Endothelial cell of umbilical vein (primary cell): ENCODE measurements at regions of chr5 and their contacts with region 1.

Region 1: DNA sequence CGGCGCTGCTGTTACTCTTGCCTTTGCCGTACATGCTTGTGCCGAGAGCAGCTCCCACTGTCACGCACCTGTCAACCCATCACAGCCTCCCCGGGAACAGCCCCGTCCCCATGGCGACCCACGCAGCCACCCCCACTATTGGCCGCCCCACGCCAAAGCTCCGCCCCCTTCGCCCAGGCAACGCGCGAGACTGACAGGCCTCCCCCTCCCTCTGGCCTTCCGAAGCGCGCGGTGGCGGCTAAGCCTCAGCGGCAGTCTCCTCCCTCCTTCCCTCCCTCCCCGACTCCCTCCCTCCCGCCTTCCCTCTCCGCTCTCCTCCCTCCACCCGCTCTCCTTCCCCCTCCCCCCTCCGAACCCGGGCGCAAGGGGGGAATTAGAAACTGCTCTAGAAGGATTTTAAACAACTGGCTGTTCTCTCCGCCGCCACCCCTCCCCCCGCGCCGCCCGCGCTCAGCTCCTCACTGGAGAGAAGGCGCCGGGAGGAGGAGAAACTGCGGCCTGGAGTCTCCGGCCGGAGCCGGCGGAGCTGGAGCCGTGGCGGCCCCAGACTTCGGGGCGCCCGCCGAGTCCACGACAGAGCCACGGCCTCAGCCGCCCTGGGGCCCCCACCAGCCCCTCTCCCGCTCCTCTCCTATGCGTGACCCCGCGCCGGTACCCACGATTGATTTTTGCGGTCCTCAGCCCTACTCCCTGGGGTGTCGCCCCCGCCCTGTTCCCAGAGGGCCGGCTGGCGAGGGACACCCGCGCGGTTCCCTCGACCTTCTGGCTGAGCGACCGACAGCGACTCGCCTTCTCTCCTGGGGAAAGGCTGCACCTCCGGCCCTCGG is at the start of gene SSBP2:
- DNase-seq: peak; percentile 99
- H3K4me3 ChIP-seq: peak within 1 kb of the TSS; percentile 55 to 76 (median 69)
- H3K27ac ChIP-seq: peak within 1 kb of the TSS; percentile 92
- H3K4me1 ChIP-seq: peaks cover 15% of the 10 kb centered on the region
- H3K27me3 ChIP-seq: no peaks in the 10 kb centered on the region
- CTCF ChIP-seq: no peak
- POLR2A ChIP-seq: peak; percentile 63
- total RNA-seq, gene SSBP2: 7.9 and 9.6 TPM in 2 replicates

Region 2: DNA sequence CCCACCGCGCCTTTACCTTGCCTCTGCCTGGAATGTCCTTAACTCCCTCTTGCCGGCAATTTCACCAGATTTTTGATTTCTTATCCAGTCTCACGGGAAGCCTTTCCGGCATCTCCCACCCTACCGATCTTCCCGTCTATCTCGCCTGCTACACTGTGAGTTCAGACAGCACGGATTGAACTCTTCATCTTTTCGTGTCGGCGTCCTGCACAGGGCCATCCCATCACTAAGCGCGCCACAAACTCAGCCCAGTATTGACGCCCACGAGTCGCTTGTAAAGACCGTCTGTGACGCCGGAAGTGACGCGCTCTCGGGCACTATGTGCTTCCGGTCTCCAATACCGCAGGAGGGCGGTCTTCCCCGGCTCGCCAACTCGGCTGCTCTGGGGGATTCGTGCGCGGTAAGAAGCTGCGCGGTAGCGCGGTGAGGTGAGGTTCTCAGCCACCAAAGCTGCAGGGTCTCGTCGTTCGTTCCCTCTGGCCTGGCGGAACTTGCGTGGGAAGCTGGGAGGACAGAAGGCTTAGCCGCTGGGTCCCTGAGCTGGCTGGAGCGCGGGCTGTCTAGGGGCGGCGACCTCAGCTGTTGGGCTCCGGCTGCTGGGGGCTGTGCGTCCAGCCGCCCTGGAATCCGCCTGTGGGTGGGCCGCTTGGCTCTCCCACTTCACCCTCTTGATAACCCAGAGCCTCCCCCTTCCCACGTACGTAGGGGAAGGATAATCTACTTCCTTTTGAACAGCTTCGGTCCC is 449.8 kb before region 1 on chr5 and contains the start of gene ZCCHC9:
- CTCF ChIA-PET with region 1: interaction called, 3 read pairs
- POLR2A ChIA-PET with region 1: no interaction called
- dilution Hi-C with region 1: no loop called
- intact Hi-C with region 1: loop called (anchors 1 kb)
- DNase-seq: peak; percentile 95
- H3K4me3 ChIP-seq: peak within 1 kb of the TSS; percentile 46 to 76 (median 66)
- H3K27ac ChIP-seq: peak within 1 kb of the TSS; percentile 68
- H3K4me1 ChIP-seq: peaks cover 16% of the 10 kb centered on the region
- H3K27me3 ChIP-seq: no peaks in the 10 kb centered on the region
- CTCF ChIP-seq: peak in 1 of 2 donors; percentile 14
- POLR2A ChIP-seq: peak; percentile 97
- total RNA-seq, gene ZCCHC9: 22.2 and 23.9 TPM in 2 replicates

Region 3: GRCh38 chr5:81513982-81514381 is 237.2 kb before region 1 on chr5:
- CTCF ChIA-PET with region 1: interaction called, 47 read pairs
- POLR2A ChIA-PET with region 1: no interaction called
- dilution Hi-C with region 1: no loop called
- intact Hi-C with region 1: loop called (anchors 1 kb)
- DNase-seq: peak; percentile 30
- H3K4me3 ChIP-seq: no peak overlapping the region
- H3K27ac ChIP-seq: no peak overlapping the region
- H3K4me1 ChIP-seq: peaks cover 8% of the 10 kb centered on the region
- H3K27me3 ChIP-seq: no peaks in the 10 kb centered on the region
- CTCF ChIP-seq: no peak
- POLR2A ChIP-seq: no peak

Region 4: GRCh38 chr5:81779125-81779915 is 28.1 kb after region 1 on chr5:
- CTCF ChIA-PET with region 1: interaction called, 10 read pairs
- POLR2A ChIA-PET with region 1: interaction called, 5 read pairs
- dilution Hi-C with region 1: no loop called
- intact Hi-C with region 1: loop called (anchors 1 kb)
- DNase-seq: peak; percentile 74
- H3K4me3 ChIP-seq: peak overlapping the region in 2 of 3 experiments; percentile 12 to 52
- H3K27ac ChIP-seq: peak overlapping the region; percentile 41
- H3K4me1 ChIP-seq: peaks cover 11% of the 10 kb centered on the region
- H3K27me3 ChIP-seq: no peaks in the 10 kb centered on the region
- CTCF ChIP-seq: no peak
- POLR2A ChIP-seq: no peak

Region 5: DNA sequence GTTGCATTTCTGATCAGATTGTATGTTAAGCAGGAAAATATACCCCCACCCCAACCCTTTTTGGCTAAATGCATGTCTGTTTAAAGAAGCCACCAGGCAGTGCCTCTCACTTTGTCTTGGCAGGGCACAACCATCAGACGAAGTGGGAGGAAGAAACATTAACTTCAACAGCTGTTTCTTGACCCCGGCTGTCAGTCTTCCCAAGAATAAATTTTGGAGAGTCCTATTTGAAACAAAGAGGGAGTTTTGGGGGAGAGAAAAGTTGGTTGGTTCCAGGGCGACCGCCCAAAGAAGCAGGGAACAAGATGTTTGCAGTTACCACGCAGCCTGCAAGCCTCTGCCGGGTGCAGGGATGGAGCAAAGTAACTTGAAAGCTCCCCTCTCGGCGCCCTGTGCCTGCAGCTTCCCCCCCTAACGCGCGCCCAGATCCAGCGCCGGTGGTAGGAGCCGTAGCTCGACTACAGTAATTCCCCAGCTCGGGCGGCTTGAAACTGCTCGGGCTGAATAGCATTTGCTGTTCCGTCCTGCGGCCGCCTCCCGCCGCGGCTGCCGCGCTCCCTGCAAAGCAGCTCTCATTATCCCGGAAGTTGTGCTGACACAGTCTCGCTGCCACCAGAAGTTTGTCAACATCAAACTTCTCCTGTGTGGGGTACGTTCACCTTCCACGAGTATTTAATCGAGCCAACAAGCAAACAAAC is 100.4 kb after region 1 on chr5:
- CTCF ChIA-PET with region 1: interaction called, 89 read pairs
- POLR2A ChIA-PET with region 1: interaction called, 37 read pairs
- dilution Hi-C with region 1: no loop called
- intact Hi-C with region 1: loop called (anchors 1 kb)
- DNase-seq: peak; percentile 94
- H3K4me3 ChIP-seq: peak overlapping the region in 2 of 3 experiments; percentile 40 to 54
- H3K27ac ChIP-seq: peak overlapping the region; percentile 65
- H3K4me1 ChIP-seq: peaks cover 10% of the 10 kb centered on the region
- H3K27me3 ChIP-seq: no peaks in the 10 kb centered on the region
- CTCF ChIP-seq: no peak
- POLR2A ChIP-seq: peak; percentile 88

Region 6: GRCh38 chr5:82107267-82107666 is 356.0 kb after region 1 on chr5:
- CTCF ChIA-PET with region 1: no interaction called
- POLR2A ChIA-PET with region 1: no interaction called
- dilution Hi-C with region 1: no loop called
- intact Hi-C with region 1: loop called (anchors 5 kb)
- DNase-seq: peak; percentile 32
- H3K4me3 ChIP-seq: no peak overlapping the region
- H3K27ac ChIP-seq: no peak overlapping the region
- H3K4me1 ChIP-seq: no peaks in the 10 kb centered on the region
- H3K27me3 ChIP-seq: no peaks in the 10 kb centered on the region
- CTCF ChIP-seq: peak; percentile 9 to 31
- POLR2A ChIP-seq: no peak